Lower leg skin (tissue), 4 donors: ENCODE measurements at regions of chr11 and their contacts with region 1.

Region 1: DNA sequence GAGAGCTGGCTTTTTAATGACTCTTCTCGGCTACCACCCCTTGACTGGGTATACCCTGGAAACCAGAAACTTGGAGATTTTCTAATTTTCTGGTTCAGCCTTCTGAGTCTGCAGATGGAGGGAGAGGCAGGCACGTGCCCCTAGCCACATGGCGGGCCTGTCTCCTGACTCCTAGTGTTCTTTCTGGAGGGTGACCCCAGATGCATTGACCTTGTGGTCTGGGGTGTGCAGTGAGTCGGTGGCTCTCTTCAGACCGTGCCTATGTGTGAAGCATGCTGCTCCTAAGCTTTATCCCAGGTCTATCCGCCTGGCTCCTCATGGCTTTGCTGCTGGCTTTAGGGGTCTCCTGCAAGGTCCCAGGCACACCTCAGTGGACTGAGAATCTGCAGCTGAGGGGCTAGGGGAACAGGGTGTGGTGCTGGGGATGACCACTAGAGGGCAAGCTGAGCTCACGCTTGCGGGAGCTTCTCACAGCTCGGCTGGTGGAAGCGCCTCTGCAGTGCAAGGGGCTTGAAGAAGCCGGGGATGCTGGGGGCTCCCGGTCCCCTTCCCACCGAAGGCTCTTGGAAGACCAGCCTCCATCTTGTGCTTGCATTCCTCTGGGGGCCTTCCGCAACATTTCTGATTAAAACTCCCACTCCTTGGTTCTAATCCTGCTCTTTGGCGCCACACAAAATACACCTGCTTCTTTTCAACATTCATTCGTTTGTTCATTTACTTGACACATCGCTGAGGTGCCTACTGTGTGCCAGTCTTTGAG is 51.8 kb downstream of the OTOG start:
- DNase-seq: peak; percentile 49 to 92
- H3K4me3 ChIP-seq: no peak overlapping the region
- CTCF ChIP-seq: no peak
- POLR2A ChIP-seq: no peak

Region 2: GRCh38 chr11:17683378-17684161 is 84.7 kb after region 1 on chr11:
- intact Hi-C with region 1: no loop called
- DNase-seq: no peak
- H3K4me3 ChIP-seq: no peak overlapping the region
- CTCF ChIP-seq: no peak
- POLR2A ChIP-seq: no peak

Region 3: DNA sequence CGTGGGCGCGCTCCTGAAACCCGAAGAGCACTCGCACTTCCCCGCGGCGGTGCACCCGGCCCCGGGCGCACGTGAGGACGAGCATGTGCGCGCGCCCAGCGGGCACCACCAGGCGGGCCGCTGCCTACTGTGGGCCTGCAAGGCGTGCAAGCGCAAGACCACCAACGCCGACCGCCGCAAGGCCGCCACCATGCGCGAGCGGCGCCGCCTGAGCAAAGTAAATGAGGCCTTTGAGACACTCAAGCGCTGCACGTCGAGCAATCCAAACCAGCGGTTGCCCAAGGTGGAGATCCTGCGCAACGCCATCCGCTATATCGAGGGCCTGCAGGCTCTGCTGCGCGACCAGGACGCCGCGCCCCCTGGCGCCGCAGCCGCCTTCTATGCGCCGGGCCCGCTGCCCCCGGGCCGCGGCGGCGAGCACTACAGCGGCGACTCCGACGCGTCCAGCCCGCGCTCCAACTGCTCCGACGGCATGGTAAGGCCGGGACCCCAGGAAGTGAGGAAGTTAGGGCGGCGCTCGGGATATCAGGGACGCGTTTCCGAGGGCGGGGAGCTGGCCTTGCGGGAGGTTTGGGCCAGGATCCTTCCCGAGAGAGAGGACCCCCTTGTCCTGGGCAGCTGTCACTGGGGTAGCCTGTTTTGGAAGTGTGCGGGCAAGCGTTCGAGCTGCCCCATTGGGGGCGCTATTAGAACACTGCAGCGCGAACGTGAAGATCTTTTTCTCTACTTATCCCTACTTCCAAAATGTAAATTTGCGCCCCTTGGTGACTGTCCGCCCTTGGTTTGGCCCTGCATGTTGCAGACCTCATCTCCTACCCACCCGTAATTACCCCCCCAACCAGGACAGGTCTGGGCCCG is 121.3 kb after region 1 on chr11:
- intact Hi-C with region 1: loop called (anchors 10 kb)
- DNase-seq: no peak
- H3K4me3 ChIP-seq: no peak overlapping the region
- CTCF ChIP-seq: no peak
- POLR2A ChIP-seq: no peak

Region 4: DNA sequence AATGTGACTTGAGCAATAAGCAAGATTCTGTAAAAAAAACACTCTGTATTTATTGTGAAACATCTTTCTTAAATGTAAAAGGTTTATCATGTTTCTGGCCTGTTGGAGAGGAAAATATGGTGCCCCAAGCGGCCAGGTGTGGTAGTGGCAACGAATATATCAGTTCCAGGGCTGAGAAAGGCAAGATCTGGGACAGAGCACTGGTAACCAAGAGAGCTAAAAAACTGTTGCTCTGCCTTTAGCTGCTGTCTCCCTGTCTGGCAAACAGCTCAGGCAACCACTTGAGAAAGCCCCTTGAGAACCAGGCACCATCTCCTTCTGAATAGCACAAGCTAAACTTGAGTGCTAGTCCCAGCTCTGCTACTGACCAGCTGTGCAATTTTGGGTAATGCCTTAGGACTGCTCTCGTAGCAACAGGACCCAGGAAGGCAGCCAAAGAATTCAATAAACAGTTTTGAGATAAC is 265.6 kb after region 1 on chr11:
- intact Hi-C with region 1: loop called (anchors 2 kb)
- DNase-seq: no peak
- H3K4me3 ChIP-seq: no peak overlapping the region
- CTCF ChIP-seq: no peak
- POLR2A ChIP-seq: no peak

Region 5: GRCh38 chr11:17978553-17979287 is 379.8 kb after region 1 on chr11:
- intact Hi-C with region 1: loop called (anchors 1 kb)
- DNase-seq: no peak
- H3K4me3 ChIP-seq: no peak overlapping the region
- CTCF ChIP-seq: no peak
- POLR2A ChIP-seq: no peak

Region 6: GRCh38 chr11:19370100-19370861 is 1771.4 kb after region 1 on chr11:
- intact Hi-C with region 1: no loop called
- DNase-seq: peak; percentile 88 to 91
- H3K4me3 ChIP-seq: no peak overlapping the region
- CTCF ChIP-seq: no peak
- POLR2A ChIP-seq: no peak